ENCODE measurements at regions of chr12 and their contacts with region 1.

Region 1: DNA sequence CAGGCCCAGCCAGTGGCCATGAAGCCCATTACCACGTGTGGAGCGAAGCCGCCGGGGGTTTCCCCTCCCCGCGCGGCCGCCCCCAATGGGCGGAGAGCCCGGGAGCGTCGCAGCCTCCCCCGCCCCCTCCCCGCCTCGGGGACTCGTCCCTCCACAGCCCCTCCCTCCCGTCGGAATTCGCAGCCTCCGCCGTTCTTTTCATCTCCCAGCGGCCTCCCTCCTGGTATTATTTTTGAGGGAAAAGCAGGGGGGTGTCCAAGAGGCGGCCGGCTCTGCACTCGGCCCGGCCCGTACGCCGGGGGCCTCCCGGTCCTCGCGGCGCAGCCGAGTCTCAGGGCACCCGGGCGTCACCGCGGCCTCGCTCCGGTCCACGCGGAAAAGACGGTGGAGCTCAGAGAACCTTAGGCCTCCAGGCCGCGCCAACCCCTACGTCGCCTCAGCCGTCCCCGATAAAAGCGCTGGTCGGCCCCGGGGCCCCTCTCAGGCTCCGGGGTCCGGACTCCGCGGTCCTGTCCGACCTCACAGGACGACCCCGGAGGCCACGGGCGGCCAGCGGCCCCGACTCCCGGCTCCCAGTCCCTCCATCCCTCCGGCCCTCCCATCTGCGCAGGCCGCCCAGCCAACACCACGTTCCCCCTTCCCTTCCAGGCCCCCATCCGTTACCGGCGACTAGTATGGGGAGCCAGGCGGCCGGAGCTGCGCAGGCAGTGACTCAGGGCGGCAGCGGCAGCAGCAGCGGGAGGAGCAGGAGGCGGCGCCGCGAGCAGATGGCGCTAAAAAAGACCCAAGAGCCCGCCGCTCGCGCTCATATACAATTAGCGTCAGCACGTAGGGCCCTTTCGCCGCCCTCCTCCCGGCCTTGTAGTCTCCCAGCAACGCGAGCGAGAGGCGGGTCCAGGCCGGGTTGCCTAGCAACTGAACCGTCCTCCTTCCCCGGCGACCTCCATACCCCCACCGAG is at the start of gene NAP1L1:
- DNase-seq: peak; percentile 85 to 96 (median 93)
- ATAC-seq: peak; percentile 87
- H3K4me3 ChIP-seq: peak within 1 kb of the TSS; percentile 79
- H3K4me3 Mint-ChIP-seq: peak within 1 kb of the TSS; percentile 91 to 100 (median 98)
- H3K27ac ChIP-seq: peak within 1 kb of the TSS; percentile 100
- H3K27ac Mint-ChIP-seq: peak within 1 kb of the TSS; percentile 84 to 100 (median 99)
- H3K4me1 ChIP-seq: peaks cover 27 to 28% of the 10 kb centered on the region in 2 donors
- H3K4me1 Mint-ChIP-seq: peaks cover 30 to 59% (median 54%) of the 10 kb centered on the region in 7 donors
- H3K27me3 ChIP-seq: no peaks in the 10 kb centered on the region
- H3K27me3 Mint-ChIP-seq: no peaks in the 10 kb centered on the region
- total RNA-seq, gene NAP1L1: 510 to 862 (median 625) TPM

Region 2: DNA sequence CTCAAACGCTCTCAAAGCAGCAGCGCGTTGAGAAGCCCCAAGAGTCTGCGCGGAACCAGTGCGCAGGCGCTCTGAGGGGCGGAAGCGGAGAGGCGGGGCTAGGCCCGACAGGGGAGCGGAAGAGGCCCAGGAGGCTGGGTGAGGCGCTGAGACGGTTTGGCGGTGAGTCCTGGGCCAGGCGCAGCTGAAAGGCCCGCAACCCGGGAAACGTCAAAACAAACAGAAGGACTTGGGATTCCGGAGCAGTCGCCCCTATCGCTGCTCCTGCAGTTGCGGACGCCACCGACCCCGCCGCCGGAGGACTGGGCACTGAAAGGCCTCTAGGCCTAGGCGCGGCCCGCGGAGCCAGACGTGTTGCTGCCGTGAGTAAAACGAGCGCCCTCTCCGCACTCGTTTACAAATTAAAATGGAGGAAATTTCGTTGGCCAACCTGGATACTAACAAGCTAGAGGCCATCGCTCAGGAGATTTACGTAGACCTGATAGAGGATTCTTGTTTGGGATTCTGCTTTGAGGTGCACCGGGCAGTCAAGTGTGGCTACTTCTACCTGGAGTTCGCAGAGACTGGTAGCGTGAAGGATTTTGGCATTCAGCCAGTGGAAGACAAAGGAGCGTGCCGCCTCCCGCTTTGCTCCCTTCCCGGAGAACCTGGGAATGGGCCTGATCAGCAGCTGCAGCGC is 1546.3 kb before region 1 on chr12 and contains the start of gene ATXN7L3B:
- CTCF ChIA-PET with region 1: no interaction called
- POLR2A ChIA-PET with region 1: interaction called, 4 read pairs
- intact Hi-C with region 1: loop called (anchors 2 to 5 kb)
- DNase-seq: peak; percentile 94 to 98 (median 97)
- ATAC-seq: peak; percentile 97
- H3K4me3 ChIP-seq: peak within 1 kb of the TSS; percentile 85
- H3K4me3 Mint-ChIP-seq: peak within 1 kb of the TSS; percentile 87 to 99 (median 97)
- H3K27ac ChIP-seq: peak within 1 kb of the TSS; percentile 94
- H3K27ac Mint-ChIP-seq: peak within 1 kb of the TSS; percentile 96 to 100 (median 99)
- H3K4me1 ChIP-seq: peaks cover 27 to 32% of the 10 kb centered on the region in 2 donors
- H3K4me1 Mint-ChIP-seq: peaks cover 39 to 60% (median 54%) of the 10 kb centered on the region in 7 donors
- H3K27me3 ChIP-seq: no peaks in the 10 kb centered on the region
- H3K27me3 Mint-ChIP-seq: no peaks in the 10 kb centered on the region
- total RNA-seq, gene ATXN7L3B: 25.6 to 51.6 (median 46.9) TPM

Region 3: GRCh38 chr12:75480469-75480949 is 603.7 kb before region 1 on chr12 and contains the start of gene GLIPR1:
- CTCF ChIA-PET with region 1: no interaction called
- POLR2A ChIA-PET with region 1: interaction called, 4 read pairs
- intact Hi-C with region 1: loop called (anchors 1 kb)
- DNase-seq: peak; percentile 54 to 83 (median 76)
- ATAC-seq: peak; percentile 86
- H3K4me3 ChIP-seq: peak within 1 kb of the TSS; percentile 82
- H3K4me3 Mint-ChIP-seq: peak within 1 kb of the TSS; percentile 86 to 99 (median 97)
- H3K27ac ChIP-seq: peak within 1 kb of the TSS; percentile 73
- H3K27ac Mint-ChIP-seq: peak within 1 kb of the TSS; percentile 92 to 100 (median 97)
- H3K4me1 ChIP-seq: peaks cover 49 to 54% of the 10 kb centered on the region in 2 donors
- H3K4me1 Mint-ChIP-seq: peaks cover 50 to 85% (median 75%) of the 10 kb centered on the region in 7 donors
- H3K27me3 ChIP-seq: no peaks in the 10 kb centered on the region
- H3K27me3 Mint-ChIP-seq: no peaks in the 10 kb centered on the region
- total RNA-seq, gene GLIPR1: 28.2 to 132 (median 48.7) TPM

Region 4: GRCh38 chr12:75939016-75939642 is 145.1 kb before region 1 on chr12:
- CTCF ChIA-PET with region 1: no interaction called
- POLR2A ChIA-PET with region 1: no interaction called
- intact Hi-C with region 1: loop called in 1 of 2 experiments (anchors 1 kb)
- DNase-seq: no peak
- ATAC-seq: no peak
- H3K4me3 ChIP-seq: no peak overlapping the region
- H3K4me3 Mint-ChIP-seq: no peak overlapping the region
- H3K27ac ChIP-seq: no peak overlapping the region
- H3K27ac Mint-ChIP-seq: no peak overlapping the region
- H3K4me1 ChIP-seq: peaks cover 0 to 15% of the 10 kb centered on the region in 2 donors
- H3K4me1 Mint-ChIP-seq: peaks cover 0 to 15% (median 12%) of the 10 kb centered on the region in 7 donors
- H3K27me3 ChIP-seq: no peaks in the 10 kb centered on the region
- H3K27me3 Mint-ChIP-seq: no peaks in the 10 kb centered on the region

Region 5: DNA sequence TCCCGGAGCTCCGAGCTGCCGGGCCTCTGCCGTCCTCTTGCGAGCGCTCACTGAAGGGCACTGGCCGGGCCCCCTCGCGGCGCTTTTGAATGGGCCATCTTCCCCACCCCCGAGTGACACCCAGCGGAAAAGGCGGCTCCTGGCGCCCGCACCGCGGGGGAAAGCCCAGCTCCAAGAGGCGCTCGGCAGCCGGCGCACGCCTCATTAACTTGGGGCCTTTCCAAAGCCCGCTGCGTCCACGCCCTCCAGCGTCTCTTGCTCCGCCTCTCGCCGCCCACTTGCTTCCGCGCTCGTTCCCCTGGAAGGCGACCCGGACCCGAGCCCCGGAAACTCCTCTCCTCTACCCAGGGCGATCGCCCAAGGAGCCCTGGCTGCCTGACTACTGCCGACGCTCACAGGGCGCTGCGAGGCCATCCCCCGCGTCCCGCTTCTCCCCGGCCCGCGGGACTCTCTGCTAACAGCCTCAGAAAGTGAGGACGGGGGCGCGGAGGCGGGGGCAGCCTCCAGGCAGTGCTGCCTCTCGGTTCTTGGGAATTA is 52.6 kb before region 1 on chr12 and contains the start of gene PHLDA1:
- CTCF ChIA-PET with region 1: no interaction called
- POLR2A ChIA-PET with region 1: interaction called, 6 read pairs
- intact Hi-C with region 1: loop called (anchors 1 kb)
- DNase-seq: peak; percentile 56 to 97 (median 69)
- ATAC-seq: peak; percentile 91
- H3K4me3 ChIP-seq: peak within 1 kb of the TSS; percentile 76
- H3K4me3 Mint-ChIP-seq: peak within 1 kb of the TSS; percentile 85 to 98 (median 93)
- H3K27ac ChIP-seq: peak within 1 kb of the TSS; percentile 74
- H3K27ac Mint-ChIP-seq: peak within 1 kb of the TSS; percentile 74 to 98 (median 82)
- H3K4me1 ChIP-seq: peaks cover 5% of the 10 kb centered on the region in 2 donors
- H3K4me1 Mint-ChIP-seq: peaks cover 5 to 57% (median 23%) of the 10 kb centered on the region in 7 donors
- H3K27me3 ChIP-seq: no peaks in the 10 kb centered on the region
- H3K27me3 Mint-ChIP-seq: peaks cover 0 to 5% (median 0%) of the 10 kb centered on the region in 5 donors
- total RNA-seq, gene PHLDA1: 1.1 to 25.1 (median 4.6) TPM

Region 6: GRCh38 chr12:76348079-76348901 is 264.1 kb after region 1 on chr12 and contains the start of gene BBS10:
- CTCF ChIA-PET with region 1: no interaction called
- POLR2A ChIA-PET with region 1: no interaction called
- intact Hi-C with region 1: loop called (anchors 1 kb)
- DNase-seq: peak; percentile 64 to 86 (median 84)
- ATAC-seq: peak; percentile 97
- H3K4me3 ChIP-seq: peak within 1 kb of the TSS; percentile 88
- H3K4me3 Mint-ChIP-seq: peak within 1 kb of the TSS; percentile 89 to 98 (median 96)
- H3K27ac ChIP-seq: peak within 1 kb of the TSS; percentile 79
- H3K27ac Mint-ChIP-seq: peak within 1 kb of the TSS; percentile 85 to 95 (median 93)
- H3K4me1 ChIP-seq: peaks cover 16 to 20% of the 10 kb centered on the region in 2 donors
- H3K4me1 Mint-ChIP-seq: peaks cover 15 to 48% (median 30%) of the 10 kb centered on the region in 7 donors
- H3K27me3 ChIP-seq: no peaks in the 10 kb centered on the region
- H3K27me3 Mint-ChIP-seq: no peaks in the 10 kb centered on the region
- total RNA-seq, gene BBS10: 2.5 to 11.5 (median 5.2) TPM

Region 7: DNA sequence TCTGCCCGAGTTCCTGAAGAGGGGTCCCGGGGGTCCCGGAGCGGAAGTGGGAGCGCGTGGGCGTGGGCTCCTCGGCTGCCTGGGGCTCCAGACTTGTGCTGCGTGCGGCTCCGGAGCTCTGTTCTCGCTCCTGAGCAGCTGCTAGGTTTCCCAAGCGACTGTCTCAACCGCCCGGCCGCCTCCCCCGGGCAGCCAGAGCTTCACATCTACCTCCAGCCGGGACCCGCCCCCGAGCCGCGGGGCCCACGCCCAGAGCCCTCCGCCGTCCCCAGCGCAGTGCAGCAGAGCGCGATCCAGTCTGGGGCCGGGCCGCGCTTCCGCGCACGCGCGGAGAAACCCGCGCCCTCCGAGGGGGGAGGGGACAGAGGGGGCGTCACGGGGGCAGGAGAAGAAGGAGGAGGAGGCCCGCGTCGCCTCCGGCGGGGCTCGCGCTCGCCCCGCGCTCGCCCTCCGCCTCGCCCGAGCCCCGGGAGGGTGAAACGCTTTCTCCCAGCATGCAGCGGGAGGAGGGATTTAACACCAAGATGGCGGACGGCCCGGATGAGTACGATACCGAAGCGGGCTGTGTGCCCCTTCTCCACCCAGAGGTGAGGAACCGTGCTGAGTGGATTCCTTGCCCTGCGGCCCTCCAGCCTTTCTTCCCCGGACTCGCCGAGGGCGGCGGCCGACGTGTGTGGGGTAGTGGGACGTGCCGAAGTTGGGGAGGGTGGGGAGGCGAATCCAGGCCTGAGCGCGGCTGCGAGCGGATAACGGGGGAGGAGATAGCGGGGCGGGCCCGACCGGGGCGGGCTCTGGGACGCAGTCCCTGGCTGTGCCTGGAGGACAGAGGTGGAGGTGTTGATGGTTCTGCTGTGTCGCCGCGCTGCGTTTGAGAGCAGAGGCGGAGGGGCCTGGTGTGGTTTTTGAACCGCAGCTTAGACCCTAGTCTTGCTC is 679.8 kb after region 1 on chr12 and contains the start of gene ZDHHC17:
- CTCF ChIA-PET with region 1: no interaction called
- POLR2A ChIA-PET with region 1: no interaction called
- intact Hi-C with region 1: loop called (anchors 1 kb)
- DNase-seq: peak; percentile 90 to 95 (median 93)
- ATAC-seq: peak; percentile 90
- H3K4me3 ChIP-seq: peak within 1 kb of the TSS; percentile 84
- H3K4me3 Mint-ChIP-seq: peak within 1 kb of the TSS; percentile 92 to 98 (median 97)
- H3K27ac ChIP-seq: peak within 1 kb of the TSS; percentile 94
- H3K27ac Mint-ChIP-seq: peak within 1 kb of the TSS; percentile 95 to 99 (median 97)
- H3K4me1 ChIP-seq: peaks cover 8 to 13% of the 10 kb centered on the region in 2 donors
- H3K4me1 Mint-ChIP-seq: peaks cover 17 to 57% (median 46%) of the 10 kb centered on the region in 7 donors
- H3K27me3 ChIP-seq: no peaks in the 10 kb centered on the region
- H3K27me3 Mint-ChIP-seq: peaks cover 0 to 13% (median 0%) of the 10 kb centered on the region in 5 donors
- total RNA-seq, gene ZDHHC17: 27.3 to 60.9 (median 56.3) TPM

Measured in naive thymus-derived CD4-positive, alpha-beta T cell (primary cell).